ENCODE measurements at regions of chr7 and their contacts with region 1.

Region 1: GRCh38 chr7:150753826-150754603 is 16.8 kb downstream of the GIMAP5 start:
- DNase-seq: peak; percentile 54
- H3K4me3 Mint-ChIP-seq: peak overlapping the region; percentile 26
- H3K27ac Mint-ChIP-seq: peak overlapping the region; percentile 94
- H3K4me1 Mint-ChIP-seq: peaks cover 74% of the 10 kb centered on the region
- H3K27me3 Mint-ChIP-seq: no peaks in the 10 kb centered on the region

Region 2: GRCh38 chr7:150322833-150323681 is 431.0 kb before region 1 on chr7 and contains the starts of genes ACTR3C and LRRC61:
- CTCF ChIA-PET with region 1: no interaction called
- POLR2A ChIA-PET with region 1: no interaction called
- intact Hi-C with region 1: loop called (anchors 5 kb)
- DNase-seq: peak; percentile 79
- H3K4me3 Mint-ChIP-seq: peak within 1 kb of the TSS; percentile 97
- H3K27ac Mint-ChIP-seq: peak within 1 kb of the TSS; percentile 100
- H3K4me1 Mint-ChIP-seq: peaks cover 59% of the 10 kb centered on the region
- H3K27me3 Mint-ChIP-seq: no peaks in the 10 kb centered on the region
- total RNA-seq, gene ACTR3C: 8.0 to 8.8 TPM
- total RNA-seq, gene LRRC61: 26.1 to 27.1 TPM

Region 3: GRCh38 chr7:150439967-150440366 is 314.0 kb before region 1 on chr7:
- CTCF ChIA-PET with region 1: interaction called, 80 read pairs
- POLR2A ChIA-PET with region 1: no interaction called
- intact Hi-C with region 1: loop called (anchors 2 kb)
- DNase-seq: no peak
- H3K4me3 Mint-ChIP-seq: no peak overlapping the region
- H3K27ac Mint-ChIP-seq: peak overlapping the region; percentile 8
- H3K4me1 Mint-ChIP-seq: peaks cover 24% of the 10 kb centered on the region
- H3K27me3 Mint-ChIP-seq: no peaks in the 10 kb centered on the region

Region 4: DNA sequence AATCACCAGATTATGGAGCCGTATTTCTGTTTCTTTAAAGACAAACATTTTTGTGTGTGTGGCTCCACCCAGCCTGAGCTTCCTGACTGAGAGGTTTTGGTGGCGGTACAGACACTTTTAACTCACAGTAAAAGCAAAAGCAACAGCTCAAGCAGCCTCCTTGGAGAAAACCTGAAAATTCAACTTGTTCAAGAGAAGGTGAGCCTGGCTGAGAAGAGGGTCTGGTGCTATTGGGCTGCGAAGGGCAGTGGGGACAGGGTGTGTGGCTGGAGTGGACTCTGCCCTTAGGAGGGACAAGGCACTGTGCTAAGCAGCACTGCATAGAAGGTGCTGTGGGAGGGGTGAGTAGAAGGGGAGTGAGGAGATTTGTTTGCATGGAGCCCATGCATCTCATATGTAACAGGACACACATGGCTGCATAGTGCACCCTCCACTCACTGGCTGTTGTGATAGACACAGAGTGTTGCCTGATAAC is 239.2 kb before region 1 on chr7 and contains the start of gene GIMAP7:
- CTCF ChIA-PET with region 1: interaction called, 3 read pairs
- POLR2A ChIA-PET with region 1: interaction called, 7 read pairs
- intact Hi-C with region 1: loop called (anchors 1 kb)
- DNase-seq: peak; percentile 73
- H3K4me3 Mint-ChIP-seq: peak within 1 kb of the TSS; percentile 94
- H3K27ac Mint-ChIP-seq: peak within 1 kb of the TSS; percentile 97
- H3K4me1 Mint-ChIP-seq: peaks cover 52% of the 10 kb centered on the region
- H3K27me3 Mint-ChIP-seq: no peaks in the 10 kb centered on the region
- total RNA-seq, gene GIMAP7: 42.5 to 44.1 TPM

Region 5: GRCh38 chr7:150620617-150621371 is 133.2 kb before region 1 on chr7:
- CTCF ChIA-PET with region 1: interaction called, 5 read pairs
- POLR2A ChIA-PET with region 1: interaction called, 3 read pairs
- intact Hi-C with region 1: loop called (anchors 1 kb)
- DNase-seq: no peak
- H3K4me3 Mint-ChIP-seq: peak overlapping the region; percentile 29
- H3K27ac Mint-ChIP-seq: peak overlapping the region; percentile 95
- H3K4me1 Mint-ChIP-seq: peaks cover 56% of the 10 kb centered on the region
- H3K27me3 Mint-ChIP-seq: no peaks in the 10 kb centered on the region

Region 6: DNA sequence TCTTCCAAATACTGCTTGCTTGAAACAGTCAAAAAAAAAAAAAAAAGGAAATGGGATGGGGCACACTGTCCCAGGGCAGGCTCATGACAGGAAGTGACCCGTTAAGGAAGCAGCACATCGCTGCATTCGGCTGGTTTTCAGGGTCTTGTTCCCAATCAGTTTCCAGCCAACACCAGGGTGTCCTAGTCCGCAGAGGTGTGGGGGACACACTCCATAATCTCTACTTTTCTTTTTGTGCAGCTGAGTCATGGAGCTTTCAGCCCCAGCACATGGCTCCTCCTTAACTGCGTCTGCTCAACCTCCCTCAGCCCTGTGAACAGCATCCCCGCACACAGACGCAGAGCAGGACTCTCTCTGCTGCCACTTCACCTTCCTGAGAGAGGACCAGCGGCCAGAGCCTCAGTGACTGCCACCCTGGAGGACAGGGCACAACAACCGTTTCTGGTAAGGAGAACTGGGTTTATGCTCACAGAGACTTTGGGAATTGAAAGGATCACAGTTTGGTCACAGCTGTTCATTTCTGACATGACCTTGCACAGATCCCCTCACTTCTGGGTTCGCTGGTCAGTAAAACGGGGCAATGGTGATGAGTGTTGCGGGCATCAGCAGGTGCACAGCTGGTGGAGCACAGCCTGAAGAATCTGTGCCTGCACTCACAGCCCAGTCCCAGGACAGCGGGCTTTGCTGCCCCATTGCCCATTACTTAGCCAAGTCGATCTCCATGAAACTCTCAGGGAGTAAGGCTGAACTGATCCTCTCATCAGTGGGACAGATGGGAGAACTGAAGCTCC is 16.6 kb before region 1 on chr7 and contains the start of gene GIMAP5:
- CTCF ChIA-PET with region 1: interaction called, 21 read pairs
- POLR2A ChIA-PET with region 1: interaction called, 20 read pairs
- intact Hi-C with region 1: loop called (anchors 1 kb)
- DNase-seq: peak; percentile 77
- H3K4me3 Mint-ChIP-seq: peak within 1 kb of the TSS; percentile 87
- H3K27ac Mint-ChIP-seq: peak within 1 kb of the TSS; percentile 97
- H3K4me1 Mint-ChIP-seq: peaks cover 72% of the 10 kb centered on the region
- H3K27me3 Mint-ChIP-seq: no peaks in the 10 kb centered on the region
- total RNA-seq, gene GIMAP5: 45.9 to 48.3 TPM

Region 7: GRCh38 chr7:150799741-150800580 is 45.9 kb after region 1 on chr7 and contains the start of gene TMEM176B:
- CTCF ChIA-PET with region 1: no interaction called
- POLR2A ChIA-PET with region 1: no interaction called
- intact Hi-C with region 1: no loop called
- DNase-seq: no peak
- H3K4me3 Mint-ChIP-seq: peak within 1 kb of the TSS; percentile 55
- H3K27ac Mint-ChIP-seq: no peak within 1 kb of the TSS
- H3K4me1 Mint-ChIP-seq: peaks cover 5% of the 10 kb centered on the region
- H3K27me3 Mint-ChIP-seq: peaks cover 41% of the 10 kb centered on the region
- total RNA-seq, gene TMEM176B: not detected